ENCODE measurements at regions of chr1 and their contacts with region 1.

Region 1: GRCh38 chr1:84143796-84144565 is at the start of gene PRKACB:
- DNase-seq: peak; percentile 52 to 68 (median 58)
- H3K4me3 ChIP-seq: peak within 1 kb of the TSS; percentile 49 to 93
- H3K4me3 Mint-ChIP-seq: peak within 1 kb of the TSS; percentile 94 to 100 (median 98)
- H3K27ac ChIP-seq: peak within 1 kb of the TSS; percentile 54
- H3K27ac Mint-ChIP-seq: peak within 1 kb of the TSS; percentile 91 to 99 (median 97)
- H3K4me1 ChIP-seq: peaks cover 44% of the 10 kb centered on the region
- H3K4me1 Mint-ChIP-seq: peaks cover 22 to 57% (median 30%) of the 10 kb centered on the region in 4 donors
- H3K27me3 ChIP-seq: no peaks in the 10 kb centered on the region
- H3K27me3 Mint-ChIP-seq: no peaks in the 10 kb centered on the region
- total RNA-seq, gene PRKACB: 128 to 131 TPM

Region 2: DNA sequence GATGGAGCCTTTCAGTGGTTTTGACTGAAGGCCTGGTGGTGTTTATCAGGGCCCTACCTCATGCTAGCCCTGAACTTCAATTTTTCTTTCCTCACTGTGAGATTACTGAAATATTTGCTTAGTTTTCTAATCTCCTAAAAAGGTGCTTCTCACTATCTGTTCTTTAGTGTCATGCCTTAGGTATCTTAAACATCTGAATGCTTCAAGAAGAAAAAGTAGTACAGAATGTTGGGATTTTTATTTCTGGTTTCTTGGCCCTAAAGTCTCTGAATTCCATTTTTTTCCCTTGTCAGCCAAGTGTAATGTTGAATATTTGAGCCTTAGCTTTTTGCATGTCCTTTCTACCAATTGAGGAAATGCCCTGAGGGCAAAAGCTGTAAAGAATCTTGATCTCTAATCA is 47.8 kb before region 1 on chr1:
- CTCF ChIA-PET with region 1: no interaction called
- POLR2A ChIA-PET with region 1: no interaction called
- intact Hi-C with region 1: no loop called
- DNase-seq: no peak
- H3K4me3 ChIP-seq: no peak overlapping the region
- H3K4me3 Mint-ChIP-seq: no peak overlapping the region
- H3K27ac ChIP-seq: no peak overlapping the region
- H3K27ac Mint-ChIP-seq: peak overlapping the region in 1 of 7 donors; percentile 24
- H3K4me1 ChIP-seq: peaks cover 6% of the 10 kb centered on the region
- H3K4me1 Mint-ChIP-seq: peaks cover 0 to 4% (median 1%) of the 10 kb centered on the region in 4 donors
- H3K27me3 ChIP-seq: no peaks in the 10 kb centered on the region
- H3K27me3 Mint-ChIP-seq: peaks cover 2 to 5% of the 10 kb centered on the region in 2 donors

Region 3: GRCh38 chr1:84156210-84156621 is 12.2 kb after region 1 on chr1:
- CTCF ChIA-PET with region 1: interaction called, 5 read pairs
- POLR2A ChIA-PET with region 1: interaction called, 12 read pairs
- intact Hi-C with region 1: loop called (anchors 1 kb)
- DNase-seq: peak in 1 of 5 donors; percentile 35
- H3K4me3 ChIP-seq: no peak overlapping the region
- H3K4me3 Mint-ChIP-seq: peak overlapping the region in 6 of 8 donors; percentile 16 to 52 (median 36)
- H3K27ac ChIP-seq: no peak overlapping the region
- H3K27ac Mint-ChIP-seq: peak overlapping the region in 4 of 7 donors; percentile 13 to 67 (median 42)
- H3K4me1 ChIP-seq: peaks cover 87% of the 10 kb centered on the region
- H3K4me1 Mint-ChIP-seq: peaks cover 61 to 92% (median 84%) of the 10 kb centered on the region in 4 donors
- H3K27me3 ChIP-seq: no peaks in the 10 kb centered on the region
- H3K27me3 Mint-ChIP-seq: no peaks in the 10 kb centered on the region

Region 4: GRCh38 chr1:84208935-84209334 is 65.0 kb after region 1 on chr1:
- CTCF ChIA-PET with region 1: no interaction called
- POLR2A ChIA-PET with region 1: no interaction called
- intact Hi-C with region 1: loop called (anchors 10 kb)
- DNase-seq: no peak
- H3K4me3 ChIP-seq: no peak overlapping the region
- H3K4me3 Mint-ChIP-seq: no peak overlapping the region
- H3K27ac ChIP-seq: no peak overlapping the region
- H3K27ac Mint-ChIP-seq: peak overlapping the region in 4 of 7 donors; percentile 35 to 58 (median 48)
- H3K4me1 ChIP-seq: no peaks in the 10 kb centered on the region
- H3K4me1 Mint-ChIP-seq: peaks cover 5 to 17% (median 12%) of the 10 kb centered on the region in 4 donors
- H3K27me3 ChIP-seq: no peaks in the 10 kb centered on the region
- H3K27me3 Mint-ChIP-seq: no peaks in the 10 kb centered on the region

Region 5: DNA sequence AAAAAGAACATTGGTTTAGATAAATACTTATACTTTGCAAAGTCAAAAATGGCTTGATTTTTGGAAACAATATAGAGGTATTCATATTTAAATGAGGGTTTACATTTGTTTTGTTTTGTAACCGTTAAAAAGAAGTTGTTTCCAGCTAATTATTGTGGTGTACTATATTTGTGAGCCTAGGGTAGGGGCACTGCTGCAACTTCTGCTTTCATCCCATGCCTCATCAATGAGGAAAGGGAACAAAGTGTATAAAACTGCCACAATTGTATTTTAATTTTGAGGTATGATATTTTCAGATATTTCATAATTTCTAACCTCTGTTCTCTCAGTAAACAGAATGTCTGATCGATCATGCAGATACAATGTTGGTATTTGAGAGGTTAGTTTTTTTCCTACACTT is 92.3 kb after region 1 on chr1:
- CTCF ChIA-PET with region 1: no interaction called
- POLR2A ChIA-PET with region 1: no interaction called
- intact Hi-C with region 1: no loop called
- DNase-seq: no peak
- H3K4me3 ChIP-seq: no peak overlapping the region
- H3K4me3 Mint-ChIP-seq: no peak overlapping the region
- H3K27ac ChIP-seq: no peak overlapping the region
- H3K27ac Mint-ChIP-seq: no peak overlapping the region
- H3K4me1 ChIP-seq: no peaks in the 10 kb centered on the region
- H3K4me1 Mint-ChIP-seq: peaks cover 3 to 6% (median 4%) of the 10 kb centered on the region in 4 donors
- H3K27me3 ChIP-seq: no peaks in the 10 kb centered on the region
- H3K27me3 Mint-ChIP-seq: no peaks in the 10 kb centered on the region

Region 6: DNA sequence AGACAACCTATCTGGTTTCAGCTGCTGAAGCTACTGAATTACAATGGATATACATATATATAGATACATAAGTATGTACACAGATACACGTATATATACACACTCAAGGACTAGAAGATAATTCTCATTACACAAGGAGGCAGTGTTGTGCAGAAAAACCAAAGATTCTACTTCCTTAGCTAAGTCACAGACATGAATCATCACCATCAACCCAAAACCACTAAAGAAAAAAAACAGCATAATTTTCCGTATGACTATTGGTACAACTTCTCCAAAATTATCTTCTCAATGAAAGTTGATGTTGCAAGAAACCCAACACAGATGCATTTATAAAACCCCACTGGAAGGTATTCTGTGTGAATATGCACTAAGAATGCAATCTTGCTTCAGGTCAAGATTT is 298.3 kb after region 1 on chr1:
- CTCF ChIA-PET with region 1: interaction called, 266 read pairs
- POLR2A ChIA-PET with region 1: interaction called, 95 read pairs
- intact Hi-C with region 1: loop called (anchors 2 kb)
- DNase-seq: peak; percentile 47 to 78 (median 72)
- H3K4me3 ChIP-seq: no peak overlapping the region
- H3K4me3 Mint-ChIP-seq: peak overlapping the region in 6 of 8 donors; percentile 37 to 68 (median 48)
- H3K27ac ChIP-seq: no peak overlapping the region
- H3K27ac Mint-ChIP-seq: peak overlapping the region in 6 of 7 donors; percentile 10 to 87 (median 62)
- H3K4me1 ChIP-seq: peaks cover 15% of the 10 kb centered on the region
- H3K4me1 Mint-ChIP-seq: peaks cover 12 to 22% (median 17%) of the 10 kb centered on the region in 4 donors
- H3K27me3 ChIP-seq: no peaks in the 10 kb centered on the region
- H3K27me3 Mint-ChIP-seq: peaks cover 4 to 9% of the 10 kb centered on the region in 2 donors

Region 7: GRCh38 chr1:84573967-84574842 is 430.2 kb after region 1 on chr1 and contains the start of gene CTBS:
- CTCF ChIA-PET with region 1: interaction called, 3 read pairs
- POLR2A ChIA-PET with region 1: interaction called, 34 read pairs
- intact Hi-C with region 1: loop called (anchors 2 kb)
- DNase-seq: peak; percentile 80 to 84 (median 83)
- H3K4me3 ChIP-seq: peak within 1 kb of the TSS; percentile 78 to 97
- H3K4me3 Mint-ChIP-seq: peak within 1 kb of the TSS; percentile 96 to 99 (median 98)
- H3K27ac ChIP-seq: peak within 1 kb of the TSS; percentile 98
- H3K27ac Mint-ChIP-seq: peak within 1 kb of the TSS; percentile 99 to 100 (median 100)
- H3K4me1 ChIP-seq: peaks cover 37% of the 10 kb centered on the region
- H3K4me1 Mint-ChIP-seq: peaks cover 29 to 46% (median 39%) of the 10 kb centered on the region in 4 donors
- H3K27me3 ChIP-seq: no peaks in the 10 kb centered on the region
- H3K27me3 Mint-ChIP-seq: no peaks in the 10 kb centered on the region
- total RNA-seq, gene CTBS: 17.4 to 18.2 TPM

Region 8: DNA sequence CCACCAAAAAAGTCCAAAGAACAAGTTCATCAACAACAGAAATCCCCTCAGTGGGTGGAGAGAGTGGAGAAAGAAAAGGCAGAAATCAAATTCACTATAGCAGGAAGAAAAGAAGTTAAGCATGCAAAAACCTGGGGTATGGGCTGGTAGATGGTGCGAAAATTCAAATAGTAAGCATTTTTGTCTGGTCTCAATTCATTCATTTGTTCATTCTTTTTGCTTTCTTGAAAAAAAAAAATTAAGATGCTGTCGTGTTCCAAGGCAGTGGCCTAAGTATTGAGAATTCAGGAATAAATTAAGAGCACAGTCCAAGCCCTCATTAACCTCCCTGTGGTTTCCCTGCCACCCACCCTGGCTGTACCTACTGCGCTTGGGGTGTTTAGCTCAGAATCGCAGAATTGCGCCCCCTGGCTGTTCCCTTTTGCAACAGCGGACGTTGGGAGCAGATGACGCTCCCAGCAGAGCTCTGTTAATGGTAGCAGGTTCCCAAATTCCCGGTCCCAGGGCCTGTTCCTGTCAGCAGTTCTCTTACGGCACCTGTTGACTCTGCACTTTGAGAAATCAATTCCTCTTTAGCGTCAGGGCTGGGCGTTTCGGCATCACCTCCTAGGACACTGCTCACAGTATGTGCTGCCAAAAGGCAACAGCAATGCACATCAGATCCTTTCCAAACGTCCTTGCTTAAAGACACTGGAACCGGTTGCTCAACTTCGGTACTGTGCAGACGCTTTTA is 580.3 kb after region 1 on chr1:
- CTCF ChIA-PET with region 1: interaction called, 12 read pairs
- POLR2A ChIA-PET with region 1: no interaction called
- intact Hi-C with region 1: no loop called
- DNase-seq: peak; percentile 22 to 46 (median 40)
- H3K4me3 ChIP-seq: no peak overlapping the region
- H3K4me3 Mint-ChIP-seq: no peak overlapping the region
- H3K27ac ChIP-seq: no peak overlapping the region
- H3K27ac Mint-ChIP-seq: peak overlapping the region in 1 of 7 donors; percentile 54
- H3K4me1 ChIP-seq: no peaks in the 10 kb centered on the region
- H3K4me1 Mint-ChIP-seq: peaks cover 0 to 1% (median 0%) of the 10 kb centered on the region in 4 donors
- H3K27me3 ChIP-seq: no peaks in the 10 kb centered on the region
- H3K27me3 Mint-ChIP-seq: peaks cover 0 to 5% of the 10 kb centered on the region in 2 donors

Region 9: DNA sequence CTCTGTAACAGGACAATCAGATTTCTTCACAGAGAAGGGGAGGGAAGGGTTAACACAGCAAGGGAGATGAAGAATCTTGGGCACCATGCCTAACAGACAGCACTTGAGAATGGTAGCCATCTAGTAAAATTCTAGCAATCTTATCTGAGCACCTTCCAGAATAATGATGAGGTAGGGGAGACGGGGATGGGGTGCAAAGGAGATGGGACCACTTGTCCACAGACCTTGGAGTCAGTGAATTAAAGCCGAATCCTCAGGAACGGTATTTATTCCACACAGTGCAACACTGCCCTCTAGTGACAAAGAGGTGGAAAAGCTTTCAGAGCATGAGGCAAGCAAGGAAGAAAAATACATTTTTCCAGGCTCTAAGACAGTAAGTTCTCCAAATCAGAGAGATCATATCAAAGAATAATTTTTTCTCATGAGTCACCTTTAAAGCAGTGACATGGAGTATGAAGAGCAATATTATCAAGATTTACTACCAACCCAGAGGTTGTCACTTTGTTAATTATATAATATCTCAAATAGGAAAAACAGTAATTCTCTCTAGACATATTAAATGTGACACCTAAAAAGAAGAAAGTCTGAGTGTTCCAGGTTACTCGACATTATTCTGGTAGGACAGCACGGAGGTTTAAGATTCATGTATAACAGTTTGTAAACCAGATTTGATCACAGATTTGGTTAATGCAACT is 792.3 kb after region 1 on chr1:
- CTCF ChIA-PET with region 1: interaction called, 7 read pairs
- POLR2A ChIA-PET with region 1: interaction called, 3 read pairs
- intact Hi-C with region 1: loop called (anchors 1 kb)
- DNase-seq: peak in 4 of 5 donors; percentile 52 to 62 (median 60)
- H3K4me3 ChIP-seq: no peak overlapping the region
- H3K4me3 Mint-ChIP-seq: no peak overlapping the region
- H3K27ac ChIP-seq: no peak overlapping the region
- H3K27ac Mint-ChIP-seq: no peak overlapping the region
- H3K4me1 ChIP-seq: peaks cover 3% of the 10 kb centered on the region
- H3K4me1 Mint-ChIP-seq: peaks cover 0 to 5% (median 2%) of the 10 kb centered on the region in 4 donors
- H3K27me3 ChIP-seq: no peaks in the 10 kb centered on the region
- H3K27me3 Mint-ChIP-seq: no peaks in the 10 kb centered on the region